Natural killer cell (primary cell): ENCODE measurements at regions of chr6 and their contacts with region 1.

Region 1: GRCh38 chr6:38027685-38028373 is 208.3 kb downstream of the ZFAND3 start:
- DNase-seq: no peak
- ATAC-seq: no peak
- H3K4me3 ChIP-seq: no peak overlapping the region
- H3K4me3 Mint-ChIP-seq: no peak overlapping the region
- H3K27ac ChIP-seq: no peak overlapping the region
- H3K27ac Mint-ChIP-seq: peak overlapping the region in 1 of 2 donors; percentile 22
- H3K4me1 ChIP-seq: no peaks in the 10 kb centered on the region
- H3K4me1 Mint-ChIP-seq: peaks cover 54 to 67% of the 10 kb centered on the region in 2 donors
- H3K27me3 ChIP-seq: no peaks in the 10 kb centered on the region
- H3K27me3 Mint-ChIP-seq: no peaks in the 10 kb centered on the region
- CTCF ChIP-seq: no peak

Region 2: GRCh38 chr6:37922563-37922962 is 105.3 kb before region 1 on chr6:
- intact Hi-C with region 1: no loop called
- DNase-seq: no peak
- ATAC-seq: no peak
- H3K4me3 ChIP-seq: no peak overlapping the region
- H3K4me3 Mint-ChIP-seq: no peak overlapping the region
- H3K27ac ChIP-seq: no peak overlapping the region
- H3K27ac Mint-ChIP-seq: peak overlapping the region in 1 of 2 donors; percentile 39
- H3K4me1 ChIP-seq: peaks cover 6% of the 10 kb centered on the region
- H3K4me1 Mint-ChIP-seq: peaks cover 36 to 66% of the 10 kb centered on the region in 2 donors
- H3K27me3 ChIP-seq: no peaks in the 10 kb centered on the region
- H3K27me3 Mint-ChIP-seq: no peaks in the 10 kb centered on the region
- CTCF ChIP-seq: no peak

Region 3: GRCh38 chr6:38155144-38155543 is 127.3 kb after region 1 on chr6:
- intact Hi-C with region 1: no loop called
- DNase-seq: no peak
- ATAC-seq: peak; percentile 52 to 88 (median 80)
- H3K4me3 ChIP-seq: no peak overlapping the region
- H3K4me3 Mint-ChIP-seq: no peak overlapping the region
- H3K27ac ChIP-seq: no peak overlapping the region
- H3K27ac Mint-ChIP-seq: peak overlapping the region; percentile 45 to 46
- H3K4me1 ChIP-seq: peaks cover 11% of the 10 kb centered on the region
- H3K4me1 Mint-ChIP-seq: peaks cover 23 to 43% of the 10 kb centered on the region in 2 donors
- H3K27me3 ChIP-seq: no peaks in the 10 kb centered on the region
- H3K27me3 Mint-ChIP-seq: no peaks in the 10 kb centered on the region
- CTCF ChIP-seq: no peak

Region 4: DNA sequence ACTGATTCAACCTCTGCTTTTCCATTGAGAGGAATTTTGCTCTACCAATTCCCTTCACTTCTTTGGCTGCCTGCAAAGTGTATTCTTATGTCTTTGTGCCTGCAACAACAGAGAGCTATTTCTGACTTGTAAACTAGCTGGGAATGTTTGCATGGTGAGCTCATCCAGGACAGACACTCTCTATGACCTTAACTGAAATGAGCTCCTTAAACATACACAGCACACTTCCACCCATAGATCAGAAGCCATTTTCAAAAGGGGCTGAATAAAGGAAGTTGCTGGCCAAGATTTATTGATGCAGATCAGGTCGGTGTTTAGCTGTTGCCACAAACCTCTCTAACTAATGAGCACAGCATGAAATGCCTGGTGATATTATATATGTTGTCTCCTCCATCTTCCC is 234.2 kb after region 1 on chr6:
- intact Hi-C with region 1: no loop called
- DNase-seq: no peak
- ATAC-seq: no peak
- H3K4me3 ChIP-seq: no peak overlapping the region
- H3K4me3 Mint-ChIP-seq: no peak overlapping the region
- H3K27ac ChIP-seq: no peak overlapping the region
- H3K27ac Mint-ChIP-seq: no peak overlapping the region
- H3K4me1 ChIP-seq: no peaks in the 10 kb centered on the region
- H3K4me1 Mint-ChIP-seq: no peaks in the 10 kb centered on the region
- H3K27me3 ChIP-seq: no peaks in the 10 kb centered on the region
- H3K27me3 Mint-ChIP-seq: no peaks in the 10 kb centered on the region
- CTCF ChIP-seq: no peak

Region 5: DNA sequence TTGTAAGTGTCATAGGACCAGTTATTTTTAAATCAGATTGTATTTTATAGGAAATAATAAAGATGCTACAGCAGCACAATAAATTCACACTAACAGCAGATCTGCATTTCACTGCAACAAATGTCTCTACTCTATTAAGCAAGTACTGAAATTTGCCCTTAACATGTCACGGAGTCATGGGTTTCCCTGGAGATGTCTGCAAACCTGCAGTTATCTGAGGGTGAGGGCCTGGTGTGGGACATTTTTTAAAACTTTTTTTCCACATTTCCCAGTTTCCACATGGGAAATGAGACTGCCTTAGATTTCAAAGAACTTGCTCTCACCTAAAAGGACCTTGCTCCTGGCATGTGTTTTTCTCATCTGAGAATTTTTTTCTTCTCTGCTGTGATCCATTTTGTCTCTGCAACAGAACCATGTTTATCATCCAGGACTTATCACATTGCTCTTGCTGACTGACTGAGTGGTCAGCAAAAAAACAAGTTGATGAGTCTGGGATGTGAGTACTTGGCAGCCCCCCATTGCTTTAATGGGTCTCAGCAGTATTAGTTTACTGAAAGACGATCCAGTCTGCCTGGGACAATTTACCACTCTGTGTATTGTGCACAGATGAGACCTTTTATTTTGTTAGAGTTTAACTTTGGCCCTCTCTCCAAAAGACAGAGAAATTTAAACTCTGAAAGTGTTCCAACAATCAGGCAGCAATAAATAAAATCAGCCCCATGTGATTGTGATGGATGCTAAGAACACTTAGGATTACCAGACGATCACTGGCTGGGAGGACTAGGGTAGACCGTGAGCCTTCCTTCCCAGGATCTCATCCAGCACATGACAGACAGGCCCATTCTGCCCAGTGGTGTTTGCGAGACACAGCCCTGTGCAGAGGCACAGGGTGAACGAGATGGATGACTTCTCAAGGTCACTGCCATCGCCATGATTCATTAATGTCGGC is 343.1 kb after region 1 on chr6:
- intact Hi-C with region 1: no loop called
- DNase-seq: no peak
- ATAC-seq: no peak
- H3K4me3 ChIP-seq: no peak overlapping the region
- H3K4me3 Mint-ChIP-seq: no peak overlapping the region
- H3K27ac ChIP-seq: no peak overlapping the region
- H3K27ac Mint-ChIP-seq: no peak overlapping the region
- H3K4me1 ChIP-seq: no peaks in the 10 kb centered on the region
- H3K4me1 Mint-ChIP-seq: peaks cover 12 to 16% of the 10 kb centered on the region in 2 donors
- H3K27me3 ChIP-seq: no peaks in the 10 kb centered on the region
- H3K27me3 Mint-ChIP-seq: no peaks in the 10 kb centered on the region
- CTCF ChIP-seq: no peak

Region 6: GRCh38 chr6:38493931-38494547 is 466.2 kb after region 1 on chr6:
- intact Hi-C with region 1: loop called (anchors 10 kb)
- DNase-seq: peak; percentile 71 to 85
- ATAC-seq: peak; percentile 43 to 70 (median 58)
- H3K4me3 ChIP-seq: no peak overlapping the region
- H3K4me3 Mint-ChIP-seq: no peak overlapping the region
- H3K27ac ChIP-seq: no peak overlapping the region
- H3K27ac Mint-ChIP-seq: no peak overlapping the region
- H3K4me1 ChIP-seq: peaks cover 11% of the 10 kb centered on the region
- H3K4me1 Mint-ChIP-seq: peaks cover 22 to 26% of the 10 kb centered on the region in 2 donors
- H3K27me3 ChIP-seq: no peaks in the 10 kb centered on the region
- H3K27me3 Mint-ChIP-seq: no peaks in the 10 kb centered on the region
- CTCF ChIP-seq: peak; percentile 98